IMR-90 (cell line): ENCODE measurements at regions of chr9 and their contacts with region 1.

Region 1: GRCh38 chr9:88388172-88388885 is at the start of gene SPIN1:
- DNase-seq: peak; percentile 62
- ATAC-seq: peak; percentile 90
- H3K4me3 ChIP-seq: peak within 1 kb of the TSS; percentile 84
- H3K27ac ChIP-seq: peak within 1 kb of the TSS; percentile 94
- H3K4me1 ChIP-seq: peaks cover 13% of the 10 kb centered on the region
- H3K27me3 ChIP-seq: no peaks in the 10 kb centered on the region
- CTCF ChIP-seq: peak; percentile 64
- POLR2A ChIP-seq: 0 out of 2 replicates have a peak, but pooled peaks have one; percentile 30
- RAD21 ChIP-seq: peak; percentile 44
- total RNA-seq, gene SPIN1: 141 and 189 TPM in 2 replicates

Region 2: GRCh38 chr9:88076286-88077090 is 311.8 kb before region 1 on chr9:
- CTCF ChIA-PET with region 1: no interaction called
- POLR2A ChIA-PET with region 1: no interaction called
- dilution Hi-C with region 1: no loop called
- in situ Hi-C with region 1: no loop called
- intact Hi-C with region 1: loop called (anchors 1 kb)
- DNase-seq: peak; percentile 55
- ATAC-seq: peak; percentile 93
- H3K4me3 ChIP-seq: peak overlapping the region; percentile 45
- H3K27ac ChIP-seq: peak overlapping the region; percentile 3; the same call in 1 of the 2 replicates
- H3K4me1 ChIP-seq: no peaks in the 10 kb centered on the region; the same call in 1 of the 2 replicates
- H3K27me3 ChIP-seq: peaks cover 5% of the 10 kb centered on the region
- CTCF ChIP-seq: no peak
- POLR2A ChIP-seq: no peak
- RAD21 ChIP-seq: no peak; the same call in 1 of the 2 replicates

Region 3: GRCh38 chr9:88106491-88106890 is 281.8 kb before region 1 on chr9:
- CTCF ChIA-PET with region 1: no interaction called
- POLR2A ChIA-PET with region 1: no interaction called
- dilution Hi-C with region 1: no loop called
- in situ Hi-C with region 1: no loop called
- intact Hi-C with region 1: loop called (anchors 2 kb)
- DNase-seq: peak; percentile 36
- ATAC-seq: peak; percentile 77
- H3K4me3 ChIP-seq: no peak overlapping the region
- H3K27ac ChIP-seq: no peak overlapping the region
- H3K4me1 ChIP-seq: no peaks in the 10 kb centered on the region
- H3K27me3 ChIP-seq: peaks cover 6% of the 10 kb centered on the region; the same call in 1 of the 2 replicates
- CTCF ChIP-seq: peak; percentile 58
- POLR2A ChIP-seq: no peak
- RAD21 ChIP-seq: peak; percentile 50

Region 4: DNA sequence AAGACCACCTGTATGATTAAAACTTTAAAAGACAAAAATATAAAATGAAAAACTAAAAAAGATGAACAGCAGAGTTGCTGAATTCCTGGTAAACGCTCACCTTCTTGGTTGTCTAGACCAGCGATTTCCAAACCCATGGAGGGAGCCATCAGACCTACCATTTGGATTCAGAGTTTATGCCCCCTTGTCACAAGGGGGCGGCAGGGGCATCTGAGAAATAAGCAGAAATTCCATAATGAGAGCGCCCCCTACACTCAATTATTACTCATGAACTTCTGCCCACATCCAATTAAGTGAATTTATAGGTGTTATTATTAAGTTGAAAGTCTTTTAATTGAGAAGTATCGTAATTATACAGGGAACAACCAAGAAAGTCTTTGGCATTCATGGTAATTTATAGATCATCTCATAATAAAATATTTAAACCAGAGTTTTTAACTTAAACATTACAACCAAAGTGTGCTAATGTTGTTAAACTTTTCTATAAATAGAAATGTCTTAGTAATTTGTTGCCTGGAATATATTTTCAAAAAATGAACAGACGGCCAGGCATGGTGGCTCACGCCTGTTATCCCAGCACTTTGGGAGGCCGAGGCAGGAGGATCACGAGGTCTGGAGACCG is 214.8 kb before region 1 on chr9:
- CTCF ChIA-PET with region 1: interaction called, 3 read pairs
- POLR2A ChIA-PET with region 1: no interaction called
- dilution Hi-C with region 1: no loop called
- in situ Hi-C with region 1: no loop called
- intact Hi-C with region 1: loop called (anchors 5 kb)
- DNase-seq: peak; percentile 73
- ATAC-seq: peak; percentile 65; the same call in 1 of the 2 replicates
- H3K4me3 ChIP-seq: no peak overlapping the region
- H3K27ac ChIP-seq: no peak overlapping the region
- H3K4me1 ChIP-seq: no peaks in the 10 kb centered on the region
- H3K27me3 ChIP-seq: peaks cover 7% of the 10 kb centered on the region; the same call in 1 of the 2 replicates
- CTCF ChIP-seq: peak; percentile 99
- POLR2A ChIP-seq: no peak
- RAD21 ChIP-seq: peak; percentile 77

Region 5: DNA sequence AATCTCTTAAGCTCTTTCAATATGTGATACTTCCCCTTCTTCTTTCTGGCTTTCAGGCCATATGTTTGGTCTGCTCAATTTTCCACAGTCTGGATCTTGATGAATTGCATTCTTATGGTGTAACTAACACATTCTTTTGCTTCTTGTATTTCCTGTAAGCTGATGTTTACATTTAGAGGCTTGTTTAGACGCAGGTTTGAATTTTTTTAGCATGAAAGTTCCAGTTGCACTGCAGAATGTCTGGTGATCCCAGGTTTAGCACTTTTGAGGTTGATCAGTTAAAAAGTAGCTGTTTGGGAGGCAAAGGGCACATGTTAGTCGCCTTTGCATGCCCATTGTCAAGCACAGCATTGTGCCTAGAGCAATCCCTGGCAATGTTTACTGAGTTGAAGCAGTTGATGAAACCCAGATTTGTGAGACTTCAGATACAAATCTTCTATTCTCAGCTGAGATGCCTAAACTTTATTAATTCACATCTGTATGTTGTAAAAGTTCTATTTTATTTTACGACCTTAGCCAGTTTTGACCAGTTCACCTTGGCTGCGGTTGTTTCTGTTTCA is 190.5 kb before region 1 on chr9:
- CTCF ChIA-PET with region 1: no interaction called
- POLR2A ChIA-PET with region 1: no interaction called
- dilution Hi-C with region 1: no loop called
- in situ Hi-C with region 1: no loop called
- intact Hi-C with region 1: loop called (anchors 5 kb)
- DNase-seq: peak; percentile 87
- ATAC-seq: peak; percentile 76
- H3K4me3 ChIP-seq: peak overlapping the region; percentile 42; the same call in 1 of the 2 replicates
- H3K27ac ChIP-seq: peak overlapping the region; percentile 78
- H3K4me1 ChIP-seq: peaks cover 4% of the 10 kb centered on the region
- H3K27me3 ChIP-seq: no peaks in the 10 kb centered on the region
- CTCF ChIP-seq: no peak
- POLR2A ChIP-seq: no peak
- RAD21 ChIP-seq: no peak

Region 6: DNA sequence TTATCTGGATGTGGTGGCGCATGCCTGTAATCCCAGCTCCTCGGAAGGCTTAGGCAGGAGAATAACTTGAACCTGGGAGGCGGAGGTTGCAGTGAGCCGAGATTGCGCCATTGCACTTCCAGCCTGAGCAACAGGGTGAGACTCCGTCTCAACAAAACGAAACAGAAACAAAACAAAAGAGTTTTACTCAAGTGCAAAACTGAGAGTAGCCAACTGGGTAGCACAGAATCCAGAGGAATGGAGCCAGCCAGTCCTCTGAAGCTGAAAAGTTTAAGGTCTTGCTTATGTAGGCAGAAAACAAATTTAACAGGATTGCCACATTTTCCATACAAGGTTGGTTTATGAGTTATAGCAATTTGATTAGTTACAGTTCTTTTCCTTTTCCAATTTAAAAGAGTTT is 31.9 kb after region 1 on chr9:
- CTCF ChIA-PET with region 1: no interaction called
- POLR2A ChIA-PET with region 1: no interaction called
- dilution Hi-C with region 1: no loop called
- in situ Hi-C with region 1: no loop called
- intact Hi-C with region 1: no loop called
- DNase-seq: no peak
- ATAC-seq: no peak
- H3K4me3 ChIP-seq: no peak overlapping the region
- H3K27ac ChIP-seq: no peak overlapping the region
- H3K4me1 ChIP-seq: no peaks in the 10 kb centered on the region
- H3K27me3 ChIP-seq: no peaks in the 10 kb centered on the region
- CTCF ChIP-seq: no peak
- POLR2A ChIP-seq: no peak
- RAD21 ChIP-seq: no peak

Region 7: GRCh38 chr9:88534456-88535261 is 146.3 kb after region 1 on chr9 and contains the start of gene NXNL2:
- CTCF ChIA-PET with region 1: interaction called, 3 read pairs
- POLR2A ChIA-PET with region 1: no interaction called
- dilution Hi-C with region 1: no loop called
- in situ Hi-C with region 1: no loop called
- intact Hi-C with region 1: loop called (anchors 1 kb)
- DNase-seq: peak; percentile 82
- ATAC-seq: peak; percentile 73
- H3K4me3 ChIP-seq: peak within 1 kb of the TSS; percentile 95
- H3K27ac ChIP-seq: peak within 1 kb of the TSS; percentile 91
- H3K4me1 ChIP-seq: peaks cover 28% of the 10 kb centered on the region
- H3K27me3 ChIP-seq: no peaks in the 10 kb centered on the region
- CTCF ChIP-seq: no peak
- POLR2A ChIP-seq: no peak
- RAD21 ChIP-seq: no peak
- total RNA-seq, gene NXNL2: 3.2 and 4.7 TPM in 2 replicates